Mammary epithelial cell (primary cell): ENCODE measurements at regions of chr5 and their contacts with region 1.

Region 1: DNA sequence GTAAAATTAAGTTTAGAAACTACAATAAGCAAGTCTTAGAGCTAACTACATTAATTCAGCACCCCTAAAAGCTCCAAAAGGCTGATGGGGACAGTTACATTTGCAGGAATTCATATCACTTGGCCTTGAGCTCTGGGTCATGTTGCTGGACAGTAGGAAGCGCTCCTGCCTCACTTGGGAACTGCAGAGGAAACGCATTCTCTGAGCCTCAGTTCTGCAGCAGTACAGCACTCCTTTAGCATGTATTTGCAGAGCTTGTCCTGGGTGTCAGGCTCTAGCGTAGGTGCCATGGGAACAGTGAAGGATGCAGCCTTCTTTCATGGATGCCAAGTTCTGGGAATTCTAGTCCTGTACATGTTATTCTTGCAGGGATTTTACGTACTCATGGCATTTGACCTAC is 710.4 kb downstream of the IRX1 start:
- DNase-seq: no peak
- H3K4me3 ChIP-seq: no peak overlapping the region
- H3K27ac ChIP-seq: no peak overlapping the region
- H3K4me1 ChIP-seq: no peaks in the 10 kb centered on the region
- H3K27me3 ChIP-seq: no peaks in the 10 kb centered on the region
- CTCF ChIP-seq: peak in 1 of 2 donors; percentile 11

Region 2: DNA sequence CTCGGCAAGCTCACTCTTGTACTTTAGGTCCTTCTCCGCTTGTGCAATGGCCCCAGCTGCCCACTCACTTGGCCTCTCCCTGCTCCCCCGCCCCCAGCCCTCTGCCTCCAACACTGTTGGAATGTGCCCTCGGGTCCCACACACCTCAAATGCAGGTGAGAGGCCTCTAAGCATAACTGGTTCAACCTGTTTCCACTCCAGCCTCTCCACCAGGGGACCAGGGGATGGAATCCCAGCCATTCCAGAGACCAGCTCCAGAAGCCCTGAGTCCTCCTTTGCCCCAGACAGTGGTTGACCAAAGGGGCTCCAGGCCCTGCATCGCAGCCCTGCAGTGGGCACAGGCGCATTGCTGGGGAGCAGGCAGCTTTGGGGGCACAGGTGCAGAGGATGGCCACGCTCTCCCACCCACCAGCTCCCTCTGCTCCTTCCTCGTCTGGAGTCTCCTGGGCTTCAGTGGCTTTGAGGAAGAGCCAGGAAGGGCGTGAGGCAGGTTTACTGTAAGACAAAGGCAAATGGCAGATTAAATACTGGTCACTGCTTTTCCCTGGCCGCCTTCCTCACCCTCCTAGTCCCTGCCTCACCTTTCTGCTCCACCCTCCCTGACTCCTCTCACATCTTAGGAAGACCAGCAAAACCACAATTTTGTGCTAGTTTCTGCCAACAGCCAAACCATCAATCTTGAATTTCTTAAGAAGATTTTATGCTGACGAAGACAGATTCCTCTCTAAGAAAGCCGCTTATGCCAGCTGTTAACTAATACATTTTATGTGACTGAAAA is 1525.5 kb before region 1 on chr5:
- CTCF ChIA-PET with region 1: interaction called, 15 read pairs
- dilution Hi-C with region 1: no loop called
- in situ Hi-C with region 1: no loop called
- intact Hi-C with region 1: no loop called
- DNase-seq: peak; percentile 87
- H3K4me3 ChIP-seq: no peak overlapping the region
- H3K27ac ChIP-seq: peak overlapping the region; percentile 64
- H3K4me1 ChIP-seq: peaks cover 22% of the 10 kb centered on the region
- H3K27me3 ChIP-seq: no peaks in the 10 kb centered on the region
- CTCF ChIP-seq: peak in 1 of 2 donors; percentile 40

Region 3: GRCh38 chr5:3056866-3057265 is 1249.2 kb before region 1 on chr5:
- CTCF ChIA-PET with region 1: no interaction called
- dilution Hi-C with region 1: no loop called
- in situ Hi-C with region 1: no loop called
- intact Hi-C with region 1: no loop called
- DNase-seq: no peak
- H3K4me3 ChIP-seq: no peak overlapping the region
- H3K27ac ChIP-seq: no peak overlapping the region
- H3K4me1 ChIP-seq: no peaks in the 10 kb centered on the region
- H3K27me3 ChIP-seq: no peaks in the 10 kb centered on the region
- CTCF ChIP-seq: no peak

Region 4: GRCh38 chr5:4205398-4205797 is 100.7 kb before region 1 on chr5:
- CTCF ChIA-PET with region 1: no interaction called
- dilution Hi-C with region 1: no loop called
- in situ Hi-C with region 1: no loop called
- intact Hi-C with region 1: no loop called
- DNase-seq: no peak
- H3K4me3 ChIP-seq: no peak overlapping the region
- H3K27ac ChIP-seq: no peak overlapping the region
- H3K4me1 ChIP-seq: no peaks in the 10 kb centered on the region
- H3K27me3 ChIP-seq: no peaks in the 10 kb centered on the region
- CTCF ChIP-seq: no peak

Region 5: GRCh38 chr5:4243479-4244264 is 62.4 kb before region 1 on chr5:
- CTCF ChIA-PET with region 1: no interaction called
- dilution Hi-C with region 1: no loop called
- in situ Hi-C with region 1: no loop called
- intact Hi-C with region 1: no loop called
- DNase-seq: no peak
- H3K4me3 ChIP-seq: no peak overlapping the region
- H3K27ac ChIP-seq: no peak overlapping the region
- H3K4me1 ChIP-seq: peaks cover 7% of the 10 kb centered on the region
- H3K27me3 ChIP-seq: no peaks in the 10 kb centered on the region
- CTCF ChIP-seq: no peak

Region 6: DNA sequence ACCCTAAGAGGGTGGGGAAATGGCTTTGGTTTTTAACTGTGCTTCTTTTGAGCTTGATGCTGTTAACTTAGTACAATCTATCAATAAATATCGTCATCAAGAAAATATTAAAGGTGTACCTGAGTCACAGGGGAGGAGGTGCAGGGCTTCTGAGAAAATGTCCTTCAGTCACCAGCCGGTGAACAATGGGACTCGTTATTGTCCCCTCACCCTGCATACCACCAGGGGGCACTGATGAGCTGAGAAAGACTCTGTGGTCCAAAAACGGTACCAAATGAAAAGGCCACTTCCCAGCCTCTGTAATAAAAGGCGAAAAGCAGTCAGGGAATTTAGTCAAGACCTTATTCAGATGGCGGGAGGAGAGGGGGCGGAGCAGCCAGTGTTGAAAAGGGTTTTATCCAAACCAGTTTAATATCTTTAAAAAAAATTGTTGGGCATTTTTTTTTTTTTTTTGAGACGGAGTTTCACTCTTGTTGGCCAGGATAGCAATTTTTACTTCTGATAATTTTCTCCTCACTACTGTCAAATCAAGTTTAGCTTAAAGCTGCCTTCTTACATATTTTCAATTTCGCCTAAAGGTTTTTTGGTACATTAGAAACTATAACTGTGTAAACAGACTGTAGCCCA is 562.2 kb after region 1 on chr5:
- CTCF ChIA-PET with region 1: no interaction called
- dilution Hi-C with region 1: no loop called
- in situ Hi-C with region 1: no loop called
- intact Hi-C with region 1: loop called (anchors 10 kb)
- DNase-seq: peak; percentile 23
- H3K4me3 ChIP-seq: no peak overlapping the region
- H3K27ac ChIP-seq: no peak overlapping the region
- H3K4me1 ChIP-seq: no peaks in the 10 kb centered on the region
- H3K27me3 ChIP-seq: no peaks in the 10 kb centered on the region
- CTCF ChIP-seq: peak; percentile 88 to 95